PC-3 (cell line): ENCODE measurements at regions of chr12 and their contacts with region 1.

Region 1: GRCh38 chr12:91109148-91109564 is 2.1 kb downstream of the LUM start:
- DNase-seq: peak; percentile 83
- ATAC-seq: peak; percentile 95
- H3K4me3 ChIP-seq: peak overlapping the region; percentile 3; the same call in 1 of the 2 replicates
- H3K27ac ChIP-seq: no peak overlapping the region
- H3K4me1 ChIP-seq: peaks cover 9% of the 10 kb centered on the region
- H3K27me3 ChIP-seq: no peaks in the 10 kb centered on the region
- CTCF ChIP-seq: peak; percentile 90

Region 2: GRCh38 chr12:91129662-91130362 is 20.7 kb after region 1 on chr12:
- CTCF ChIA-PET with region 1: interaction called, 3 read pairs
- POLR2A ChIA-PET with region 1: no interaction called
- intact Hi-C with region 1: loop called (anchors 1 kb)
- DNase-seq: no peak
- ATAC-seq: no peak
- H3K4me3 ChIP-seq: no peak overlapping the region
- H3K27ac ChIP-seq: no peak overlapping the region
- H3K4me1 ChIP-seq: peaks cover 25% of the 10 kb centered on the region
- H3K27me3 ChIP-seq: no peaks in the 10 kb centered on the region
- CTCF ChIP-seq: no peak

Region 3: DNA sequence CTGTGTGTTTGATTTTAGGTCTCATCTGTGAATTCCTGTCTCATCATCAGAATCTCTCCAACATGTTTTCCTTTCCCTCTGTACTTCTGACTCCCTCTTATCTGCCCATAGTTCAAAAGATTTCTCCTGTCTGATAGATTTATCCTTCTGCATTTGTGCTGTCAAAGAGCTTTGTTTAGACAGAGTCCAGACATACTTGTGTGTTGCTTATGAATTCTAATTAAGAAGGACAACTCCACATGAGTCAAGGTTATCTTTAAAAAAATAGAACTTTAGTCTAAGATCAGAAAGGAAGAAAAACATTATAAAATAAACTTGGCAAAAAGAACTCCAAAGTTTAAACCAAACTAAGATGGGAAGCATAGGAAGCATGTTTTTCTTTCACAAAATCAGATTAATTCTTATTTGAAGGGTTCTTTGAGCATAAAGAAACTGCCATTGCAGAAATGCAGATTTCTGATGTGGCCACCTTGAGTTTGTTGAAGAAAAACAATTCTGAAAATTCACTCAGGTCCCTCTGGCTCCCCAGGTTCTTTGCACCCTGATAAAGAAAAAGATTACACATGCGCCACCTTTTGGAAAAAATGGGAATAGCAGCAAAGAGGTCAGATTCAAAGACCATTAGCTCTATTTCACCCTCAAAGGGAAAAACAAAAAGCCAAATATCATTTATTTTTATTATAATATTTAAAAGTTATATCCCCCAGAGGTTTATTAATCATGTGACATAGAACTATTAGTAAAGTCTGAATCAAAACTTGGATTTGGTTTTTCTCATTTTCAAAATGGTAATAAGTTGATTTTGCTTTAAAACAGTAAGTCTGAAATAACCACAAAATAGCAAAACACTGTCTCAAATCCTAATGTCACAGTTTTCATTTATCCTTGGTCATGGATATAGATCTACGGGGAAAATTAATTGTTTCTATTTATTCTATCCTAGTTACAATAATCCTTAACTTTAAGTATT is 217.2 kb after region 1 on chr12:
- CTCF ChIA-PET with region 1: interaction called, 3 read pairs
- POLR2A ChIA-PET with region 1: no interaction called
- intact Hi-C with region 1: loop called (anchors 2 kb)
- DNase-seq: peak; percentile 76
- ATAC-seq: no peak
- H3K4me3 ChIP-seq: no peak overlapping the region
- H3K27ac ChIP-seq: no peak overlapping the region
- H3K4me1 ChIP-seq: peaks cover 5% of the 10 kb centered on the region; the same call in 1 of the 2 replicates
- H3K27me3 ChIP-seq: no peaks in the 10 kb centered on the region
- CTCF ChIP-seq: peak; percentile 79

Region 4: GRCh38 chr12:91355150-91356006 is 246.2 kb after region 1 on chr12:
- CTCF ChIA-PET with region 1: no interaction called
- POLR2A ChIA-PET with region 1: no interaction called
- intact Hi-C with region 1: loop called (anchors 1 kb)
- DNase-seq: peak; percentile 82
- ATAC-seq: peak; percentile 92
- H3K4me3 ChIP-seq: no peak overlapping the region
- H3K27ac ChIP-seq: no peak overlapping the region
- H3K4me1 ChIP-seq: no peaks in the 10 kb centered on the region
- H3K27me3 ChIP-seq: no peaks in the 10 kb centered on the region
- CTCF ChIP-seq: peak; percentile 95